Upper lobe of right lung (tissue), 1 donor: ENCODE measurements at regions of chr14 and their contacts with region 1.

Region 1: GRCh38 chr14:76352639-76353281 is 23.2 kb upstream of the ESRRB start:
- DNase-seq: peak; percentile 81
- ATAC-seq: peak; percentile 79
- H3K4me3 ChIP-seq: peak overlapping the region; percentile 32
- H3K27ac ChIP-seq: no peak overlapping the region
- H3K4me1 ChIP-seq: peaks cover 6% of the 10 kb centered on the region
- H3K27me3 ChIP-seq: no peaks in the 10 kb centered on the region
- CTCF ChIP-seq: peak; percentile 84

Region 2: DNA sequence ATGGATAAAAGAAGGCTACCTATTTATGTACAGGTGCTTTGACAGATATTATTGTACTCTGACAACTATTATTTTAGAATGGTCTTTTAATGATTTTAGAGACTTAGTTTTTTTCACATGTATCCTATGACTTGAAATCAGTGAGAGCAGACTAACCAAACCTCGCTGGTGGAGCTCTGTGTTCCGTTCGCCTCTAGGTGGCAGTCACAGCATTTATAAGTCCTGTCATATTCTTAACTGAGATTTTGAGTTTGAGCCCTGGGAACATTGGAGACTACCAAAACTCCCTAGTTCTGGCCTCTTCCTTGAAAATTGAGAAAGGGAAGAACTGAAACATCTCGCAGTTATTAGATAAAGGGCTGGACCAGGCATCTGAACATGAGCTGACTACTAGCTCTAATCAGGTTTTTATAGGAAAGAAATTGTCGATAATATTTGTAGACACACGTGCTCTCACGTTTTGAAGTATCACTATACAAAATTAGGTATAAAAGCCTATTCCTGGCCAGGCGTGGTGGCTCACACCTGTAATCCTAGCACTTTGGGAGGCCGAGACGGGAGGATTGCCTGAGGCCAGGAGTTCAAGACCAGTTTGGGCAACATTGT is 643.5 kb before region 1 on chr14:
- intact Hi-C with region 1: loop called (anchors 10 kb)
- DNase-seq: peak; percentile 66
- ATAC-seq: peak; percentile 80
- H3K4me3 ChIP-seq: no peak overlapping the region
- H3K27ac ChIP-seq: no peak overlapping the region
- H3K4me1 ChIP-seq: peaks cover 9% of the 10 kb centered on the region
- H3K27me3 ChIP-seq: no peaks in the 10 kb centered on the region
- CTCF ChIP-seq: peak; percentile 78

Region 3: DNA sequence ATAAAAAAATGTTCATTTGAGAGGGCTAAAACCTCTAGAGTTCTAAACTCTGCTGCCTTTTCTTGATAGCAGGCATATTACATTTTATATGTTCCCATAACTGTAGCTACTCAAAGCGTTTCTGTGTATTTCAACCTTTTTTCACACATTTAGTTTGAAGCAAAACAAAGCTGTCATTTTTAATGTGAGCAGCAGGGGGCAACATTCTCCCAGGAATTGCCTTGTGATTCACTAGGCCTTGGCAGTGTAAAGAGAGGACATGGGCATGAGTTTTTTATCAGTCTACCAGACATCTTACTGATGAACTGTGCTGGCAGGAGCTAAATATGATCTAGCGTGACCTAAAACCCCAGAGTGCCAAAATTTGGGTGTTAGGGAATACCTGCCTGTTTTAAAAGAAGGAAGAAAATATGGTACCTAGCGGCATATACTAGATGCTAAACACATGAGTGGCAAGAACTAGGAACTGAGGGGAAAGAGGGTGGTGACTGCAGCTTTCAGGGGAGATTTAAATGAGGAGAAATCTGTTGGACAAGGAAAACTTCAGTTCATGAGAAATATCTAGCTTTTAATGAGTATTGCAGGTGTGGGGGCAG is 301.9 kb before region 1 on chr14:
- intact Hi-C with region 1: loop called (anchors 10 kb)
- DNase-seq: no peak
- ATAC-seq: peak; percentile 75
- H3K4me3 ChIP-seq: no peak overlapping the region
- H3K27ac ChIP-seq: no peak overlapping the region
- H3K4me1 ChIP-seq: no peaks in the 10 kb centered on the region
- H3K27me3 ChIP-seq: no peaks in the 10 kb centered on the region
- CTCF ChIP-seq: peak; percentile 74

Region 4: GRCh38 chr14:76271041-76271755 is 81.6 kb before region 1 on chr14:
- intact Hi-C with region 1: no loop called
- DNase-seq: no peak
- ATAC-seq: no peak
- H3K4me3 ChIP-seq: no peak overlapping the region
- H3K27ac ChIP-seq: no peak overlapping the region
- H3K4me1 ChIP-seq: peaks cover 3% of the 10 kb centered on the region
- H3K27me3 ChIP-seq: no peaks in the 10 kb centered on the region
- CTCF ChIP-seq: no peak